HepG2 (cell line): ENCODE measurements at regions of chr9 and their contacts with region 1.

Region 1: DNA sequence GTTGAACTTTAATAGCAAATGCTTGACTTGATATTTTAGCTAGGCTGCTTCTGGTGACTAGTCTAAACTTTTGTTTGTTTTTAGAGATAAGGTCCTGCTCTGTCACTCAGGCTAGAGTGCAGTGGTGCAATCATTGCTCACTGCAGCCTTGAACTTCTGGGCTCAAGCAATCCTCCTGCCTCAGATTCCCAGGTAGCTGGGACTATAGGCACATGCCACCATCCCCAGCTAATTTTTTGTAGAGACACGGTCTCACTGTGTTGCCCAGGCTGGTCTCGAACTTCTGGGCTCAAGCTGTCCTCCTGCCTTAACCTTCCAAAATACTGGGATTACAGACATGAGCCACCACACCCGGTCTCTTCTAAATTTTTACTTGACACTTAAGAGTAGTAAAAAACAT is 20.7 kb downstream of the CDC37L1 start:
- DNase-seq: peak; percentile 87
- ATAC-seq: peak; percentile 97
- H3K4me3 ChIP-seq: no peak overlapping the region
- H3K27ac ChIP-seq: peak overlapping the region; percentile 37
- H3K4me1 ChIP-seq: peaks cover 25% of the 10 kb centered on the region
- H3K27me3 ChIP-seq: no peaks in the 10 kb centered on the region
- CTCF ChIP-seq: no peak
- EP300 ChIP-seq: peak; percentile 65 to 77; a peak in 3 of 4 replicates
- POLR2A ChIP-seq: no peak
- RAD21 ChIP-seq: no peak; the same call in 1 of the 2 replicates

Region 2: GRCh38 chr9:3920604-3921582 is 779.2 kb before region 1 on chr9:
- CTCF ChIA-PET with region 1: no interaction called
- POLR2A ChIA-PET with region 1: no interaction called
- in situ Hi-C with region 1: no loop called
- intact Hi-C with region 1: no loop called
- DNase-seq: peak; percentile 83
- ATAC-seq: peak; percentile 97
- H3K4me3 ChIP-seq: peak overlapping the region in 2 of 3 experiments; percentile 24 to 35; a peak in 2 of 6 replicates
- H3K27ac ChIP-seq: peak overlapping the region; percentile 88
- H3K4me1 ChIP-seq: peaks cover 79% of the 10 kb centered on the region
- H3K27me3 ChIP-seq: no peaks in the 10 kb centered on the region
- CTCF ChIP-seq: no peak
- EP300 ChIP-seq: peak in 1 of 2 experiments; percentile 79; a peak in 2 of 4 replicates
- POLR2A ChIP-seq: no peak
- RAD21 ChIP-seq: no peak

Region 3: DNA sequence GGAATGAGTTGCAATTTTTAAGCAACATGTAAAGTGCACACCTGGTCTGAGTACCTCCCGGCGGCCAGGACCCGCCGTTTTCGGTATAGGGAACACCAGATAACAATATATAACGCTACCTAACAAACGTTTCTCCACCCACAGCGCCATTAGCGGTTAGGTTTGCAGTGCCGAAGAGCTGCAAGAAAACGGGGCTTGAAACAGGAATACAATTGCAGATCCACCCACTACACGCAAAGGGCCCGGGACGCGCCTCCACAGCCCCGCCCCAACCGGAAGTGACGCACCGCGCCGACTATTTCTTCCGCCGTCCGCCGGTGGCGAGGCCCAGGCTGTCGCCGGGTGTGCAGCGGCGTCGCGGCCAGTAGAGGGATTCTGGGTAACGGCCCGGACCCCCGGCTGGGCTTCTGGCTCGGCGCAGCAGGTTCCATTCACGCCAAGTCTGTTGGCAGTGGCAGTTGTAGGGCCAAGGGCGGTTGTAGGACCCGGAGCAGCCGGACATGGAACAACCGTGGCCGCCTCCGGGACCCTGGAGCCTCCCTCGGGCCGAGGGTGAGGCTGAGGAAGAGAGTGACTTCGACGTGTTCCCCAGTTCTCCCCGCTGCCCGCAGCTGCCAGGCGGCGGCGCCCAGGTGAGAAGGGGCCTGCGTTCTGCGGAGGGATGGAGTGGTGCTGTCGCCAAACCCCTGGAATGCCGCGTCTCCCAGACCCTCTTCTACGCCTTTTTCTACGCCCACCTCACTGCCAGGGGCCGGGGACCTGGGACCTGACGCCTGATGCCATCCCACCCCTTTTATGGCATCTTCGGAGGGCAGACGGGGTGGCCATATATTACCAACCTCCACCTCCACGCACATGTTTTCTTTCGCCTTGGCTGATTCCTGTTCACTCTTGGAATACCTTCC is 20.6 kb before region 1 on chr9 and contains the start of gene CDC37L1:
- CTCF ChIA-PET with region 1: no interaction called
- POLR2A ChIA-PET with region 1: interaction called, 14 read pairs
- in situ Hi-C with region 1: no loop called
- intact Hi-C with region 1: loop called (anchors 2 kb)
- DNase-seq: peak; percentile 91
- ATAC-seq: peak; percentile 93
- H3K4me3 ChIP-seq: peak within 1 kb of the TSS; percentile 79 to 94 (median 87)
- H3K27ac ChIP-seq: peak within 1 kb of the TSS; percentile 99
- H3K4me1 ChIP-seq: peaks cover 48% of the 10 kb centered on the region
- H3K27me3 ChIP-seq: no peaks in the 10 kb centered on the region; a peak in 1 of 5 replicates
- CTCF ChIP-seq: peak; percentile 72
- EP300 ChIP-seq: peak; percentile 16 to 17; a peak in 2 of 4 replicates
- POLR2A ChIP-seq: peak; percentile 93 to 95
- RAD21 ChIP-seq: peak; percentile 63
- total RNA-seq, gene CDC37L1: 17.0 and 21.6 TPM in 2 replicates

Region 4: GRCh38 chr9:4750023-4750673 is 50.1 kb after region 1 on chr9:
- CTCF ChIA-PET with region 1: no interaction called
- POLR2A ChIA-PET with region 1: no interaction called
- in situ Hi-C with region 1: no loop called
- intact Hi-C with region 1: no loop called
- DNase-seq: no peak
- ATAC-seq: no peak; the same call in 2 of the 3 replicates
- H3K4me3 ChIP-seq: no peak overlapping the region
- H3K27ac ChIP-seq: no peak overlapping the region
- H3K4me1 ChIP-seq: no peaks in the 10 kb centered on the region
- H3K27me3 ChIP-seq: no peaks in the 10 kb centered on the region
- CTCF ChIP-seq: peak; percentile 57
- EP300 ChIP-seq: no peak
- POLR2A ChIP-seq: no peak
- RAD21 ChIP-seq: peak; percentile 33; the same call in 1 of the 2 replicates